Right cardiac atrium (tissue), 5 donors: ENCODE measurements at regions of chr13 and their contacts with region 1.

Region 1: DNA sequence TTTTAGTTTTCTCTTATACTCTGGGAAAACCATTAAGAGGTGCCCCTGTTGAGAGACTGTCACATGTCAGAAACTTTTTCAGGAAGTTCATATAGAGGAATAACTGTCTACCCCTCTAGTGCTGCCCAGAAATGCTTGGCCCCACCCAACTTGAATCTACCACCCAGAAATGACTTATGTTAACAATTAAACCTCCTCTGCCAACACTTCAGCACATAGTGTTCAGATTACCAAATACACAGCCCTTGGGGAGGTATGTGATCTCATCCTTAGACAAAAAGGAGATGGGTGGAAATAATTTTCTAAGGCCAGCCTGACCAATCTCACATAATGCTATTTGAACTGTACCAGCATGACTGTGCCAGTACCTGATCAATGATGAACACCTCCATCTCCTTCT is 35.6 kb downstream of the CCDC169 start:
- DNase-seq: no peak
- ATAC-seq: no peak
- H3K4me3 ChIP-seq: no peak overlapping the region
- H3K27ac ChIP-seq: no peak overlapping the region
- H3K4me1 ChIP-seq: no peaks in the 10 kb centered on the region
- H3K27me3 ChIP-seq: no peaks in the 10 kb centered on the region

Region 2: DNA sequence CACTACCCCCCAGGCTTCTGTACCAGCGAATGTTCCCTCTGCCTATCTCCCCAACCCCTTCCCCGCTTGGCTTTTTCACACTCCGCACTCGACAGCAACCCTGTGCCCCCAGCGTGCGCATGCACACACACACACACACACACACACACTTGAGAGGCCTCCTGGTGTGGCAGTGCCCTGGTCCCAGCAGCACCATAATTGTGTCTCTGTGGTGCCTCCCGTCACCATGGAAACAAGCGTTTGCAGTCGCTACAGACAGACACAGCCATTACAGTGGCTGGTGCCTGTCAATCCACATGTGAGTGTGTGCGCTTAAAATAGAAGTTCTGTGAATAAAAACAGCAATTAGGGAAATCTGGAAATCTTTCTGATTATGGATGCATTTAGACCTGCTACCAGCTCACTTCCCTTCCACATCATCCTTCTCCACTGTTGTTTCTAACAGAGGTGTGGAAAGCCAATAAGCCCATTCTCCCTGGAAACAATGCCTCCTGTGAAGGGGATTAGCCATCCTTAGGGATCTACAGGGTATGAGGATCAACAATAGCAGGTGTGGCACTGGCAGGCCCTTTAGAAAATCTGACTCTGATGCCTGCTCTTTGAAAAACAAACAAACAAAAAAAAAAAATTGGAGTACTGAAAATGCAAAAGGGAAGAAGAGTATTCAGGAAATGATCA is 277.1 kb before region 1 on chr13:
- intact Hi-C with region 1: loop called in 1 of 4 experiments (anchors 5 kb)
- DNase-seq: peak in 1 of 3 donors; percentile 28
- ATAC-seq: no peak
- H3K4me3 ChIP-seq: no peak overlapping the region
- H3K27ac ChIP-seq: no peak overlapping the region
- H3K4me1 ChIP-seq: no peaks in the 10 kb centered on the region
- H3K27me3 ChIP-seq: no peaks in the 10 kb centered on the region

Region 3: GRCh38 chr13:36616706-36617105 is 354.7 kb after region 1 on chr13:
- intact Hi-C with region 1: no loop called
- DNase-seq: no peak
- ATAC-seq: no peak
- H3K4me3 ChIP-seq: no peak overlapping the region
- H3K27ac ChIP-seq: no peak overlapping the region
- H3K4me1 ChIP-seq: no peaks in the 10 kb centered on the region
- H3K27me3 ChIP-seq: no peaks in the 10 kb centered on the region